ENCODE measurements at regions of chr14 and their contacts with region 1.

Region 1: GRCh38 chr14:49767562-49768300 is at the start of gene KLHDC2:
- DNase-seq: peak; percentile 94
- H3K4me3 Mint-ChIP-seq: peak within 1 kb of the TSS; percentile 88
- H3K27ac Mint-ChIP-seq: peak within 1 kb of the TSS; percentile 100
- H3K4me1 Mint-ChIP-seq: peaks cover 28% of the 10 kb centered on the region
- H3K27me3 Mint-ChIP-seq: no peaks in the 10 kb centered on the region
- total RNA-seq, gene KLHDC2: 27.8 to 28.2 TPM

Region 2: DNA sequence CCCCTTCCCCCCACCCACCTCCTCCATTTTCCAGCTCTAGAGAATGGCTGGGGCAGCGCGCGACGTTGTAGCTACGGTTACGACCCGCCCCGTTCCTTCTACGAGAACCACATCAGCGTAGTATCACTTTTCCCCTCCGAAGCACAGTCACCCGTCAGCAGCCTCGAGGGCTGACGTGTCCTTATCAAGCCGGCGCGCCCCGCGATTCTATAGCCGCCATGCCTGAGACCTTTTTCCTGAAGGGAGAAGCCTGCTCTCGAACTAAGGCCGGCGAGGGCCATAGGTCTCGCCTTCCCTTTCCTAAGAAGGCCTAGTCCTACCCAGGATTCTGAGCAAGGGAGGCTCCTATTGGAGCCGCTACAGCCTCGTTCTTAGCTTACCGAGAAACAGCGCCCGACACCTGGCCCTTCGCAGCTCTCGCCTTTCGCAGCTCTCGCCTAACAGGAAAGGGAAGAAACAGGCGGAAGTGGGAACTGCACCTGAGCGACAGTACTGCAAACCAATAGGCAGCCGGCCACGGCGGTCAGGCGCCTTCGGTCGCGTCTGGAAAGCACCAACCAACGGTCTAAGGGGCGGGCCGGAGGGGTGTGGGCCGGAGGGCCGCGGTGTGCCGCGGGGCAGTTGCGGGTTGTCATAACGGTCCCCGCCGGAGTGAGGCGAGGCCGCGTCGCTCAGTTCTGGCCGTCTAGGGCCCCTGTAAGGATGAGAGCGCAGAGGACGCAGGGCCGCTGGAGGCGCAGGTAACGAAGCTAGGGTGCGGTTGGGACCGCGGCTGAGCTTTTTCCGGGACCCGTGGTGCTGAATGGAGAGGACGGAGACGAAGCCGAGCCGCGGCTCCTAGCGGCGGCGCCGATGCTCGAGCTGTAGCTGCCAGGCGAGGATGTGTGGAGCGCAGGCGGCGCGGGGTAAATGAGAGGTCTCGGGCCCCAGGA is 147.3 kb before region 1 on chr14 and contains the starts of genes MGAT2 and RPL36AL:
- CTCF ChIA-PET with region 1: interaction called, 6 read pairs
- POLR2A ChIA-PET with region 1: interaction called, 21 read pairs
- intact Hi-C with region 1: loop called (anchors 1 kb)
- DNase-seq: peak; percentile 98
- H3K4me3 Mint-ChIP-seq: peak within 1 kb of the TSS; percentile 96
- H3K27ac Mint-ChIP-seq: peak within 1 kb of the TSS; percentile 96
- H3K4me1 Mint-ChIP-seq: peaks cover 39% of the 10 kb centered on the region
- H3K27me3 Mint-ChIP-seq: no peaks in the 10 kb centered on the region
- total RNA-seq, gene MGAT2: 40.4 to 43.7 TPM
- total RNA-seq, gene RPL36AL: 314 to 320 TPM

Region 3: GRCh38 chr14:49692811-49693734 is 74.7 kb before region 1 on chr14 and contains the start of gene KLHDC1:
- CTCF ChIA-PET with region 1: interaction called, 6 read pairs
- POLR2A ChIA-PET with region 1: interaction called, 19 read pairs
- intact Hi-C with region 1: loop called (anchors 1 kb)
- DNase-seq: peak; percentile 86
- H3K4me3 Mint-ChIP-seq: peak within 1 kb of the TSS; percentile 77
- H3K27ac Mint-ChIP-seq: peak within 1 kb of the TSS; percentile 40
- H3K4me1 Mint-ChIP-seq: peaks cover 27% of the 10 kb centered on the region
- H3K27me3 Mint-ChIP-seq: no peaks in the 10 kb centered on the region
- total RNA-seq, gene KLHDC1: 1.4 to 1.9 TPM

Region 4: GRCh38 chr14:49852301-49853157 is 84.8 kb after region 1 on chr14 and contains the start of gene NEMF:
- CTCF ChIA-PET with region 1: interaction called, 9 read pairs
- POLR2A ChIA-PET with region 1: interaction called, 16 read pairs
- intact Hi-C with region 1: loop called (anchors 2 kb)
- DNase-seq: peak; percentile 88
- H3K4me3 Mint-ChIP-seq: peak within 1 kb of the TSS; percentile 98
- H3K27ac Mint-ChIP-seq: peak within 1 kb of the TSS; percentile 95
- H3K4me1 Mint-ChIP-seq: peaks cover 39% of the 10 kb centered on the region
- H3K27me3 Mint-ChIP-seq: no peaks in the 10 kb centered on the region
- total RNA-seq, gene NEMF: 63.6 to 71.0 TPM

Region 5: GRCh38 chr14:49977126-49977841 is 209.6 kb after region 1 on chr14:
- CTCF ChIA-PET with region 1: no interaction called
- POLR2A ChIA-PET with region 1: no interaction called
- intact Hi-C with region 1: no loop called
- DNase-seq: peak; percentile 65
- H3K4me3 Mint-ChIP-seq: peak overlapping the region; percentile 66
- H3K27ac Mint-ChIP-seq: peak overlapping the region; percentile 91
- H3K4me1 Mint-ChIP-seq: peaks cover 87% of the 10 kb centered on the region
- H3K27me3 Mint-ChIP-seq: no peaks in the 10 kb centered on the region

Region 6: DNA sequence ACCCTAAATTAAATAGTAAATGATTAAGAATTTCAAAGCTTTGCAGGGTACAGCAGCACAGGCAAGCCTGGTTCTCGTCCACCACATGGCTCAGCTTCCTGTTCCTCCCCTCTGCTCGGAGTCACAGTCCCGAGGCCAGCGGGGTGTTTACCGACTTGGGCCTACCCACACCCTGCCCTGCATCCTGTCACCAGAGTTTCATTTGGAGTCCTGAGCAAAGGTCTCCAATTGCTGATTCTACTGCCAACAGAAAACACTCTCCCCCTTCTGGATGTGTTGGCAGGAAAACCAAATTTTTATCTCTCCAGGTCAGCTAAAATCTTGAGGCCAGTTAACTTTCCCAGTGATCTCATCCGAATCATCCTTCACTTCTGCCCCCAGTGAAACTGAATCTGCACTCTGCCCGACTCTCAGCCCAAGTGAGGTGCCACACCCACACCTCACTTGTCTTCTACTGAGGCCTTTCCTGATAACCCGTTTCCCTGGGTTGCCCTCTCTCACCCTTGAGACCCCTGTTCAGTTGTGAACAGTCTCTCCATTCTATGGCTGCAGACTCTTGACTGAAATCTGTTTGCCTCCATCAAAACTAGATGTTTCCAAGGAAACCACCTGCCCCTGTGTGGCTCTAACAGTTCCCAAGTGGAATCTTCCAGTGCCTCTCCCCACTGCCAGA is 277.4 kb after region 1 on chr14:
- CTCF ChIA-PET with region 1: no interaction called
- POLR2A ChIA-PET with region 1: no interaction called
- intact Hi-C with region 1: loop called (anchors 10 kb)
- DNase-seq: peak; percentile 90
- H3K4me3 Mint-ChIP-seq: peak overlapping the region; percentile 0
- H3K27ac Mint-ChIP-seq: peak overlapping the region; percentile 87
- H3K4me1 Mint-ChIP-seq: peaks cover 59% of the 10 kb centered on the region
- H3K27me3 Mint-ChIP-seq: no peaks in the 10 kb centered on the region

Region 7: DNA sequence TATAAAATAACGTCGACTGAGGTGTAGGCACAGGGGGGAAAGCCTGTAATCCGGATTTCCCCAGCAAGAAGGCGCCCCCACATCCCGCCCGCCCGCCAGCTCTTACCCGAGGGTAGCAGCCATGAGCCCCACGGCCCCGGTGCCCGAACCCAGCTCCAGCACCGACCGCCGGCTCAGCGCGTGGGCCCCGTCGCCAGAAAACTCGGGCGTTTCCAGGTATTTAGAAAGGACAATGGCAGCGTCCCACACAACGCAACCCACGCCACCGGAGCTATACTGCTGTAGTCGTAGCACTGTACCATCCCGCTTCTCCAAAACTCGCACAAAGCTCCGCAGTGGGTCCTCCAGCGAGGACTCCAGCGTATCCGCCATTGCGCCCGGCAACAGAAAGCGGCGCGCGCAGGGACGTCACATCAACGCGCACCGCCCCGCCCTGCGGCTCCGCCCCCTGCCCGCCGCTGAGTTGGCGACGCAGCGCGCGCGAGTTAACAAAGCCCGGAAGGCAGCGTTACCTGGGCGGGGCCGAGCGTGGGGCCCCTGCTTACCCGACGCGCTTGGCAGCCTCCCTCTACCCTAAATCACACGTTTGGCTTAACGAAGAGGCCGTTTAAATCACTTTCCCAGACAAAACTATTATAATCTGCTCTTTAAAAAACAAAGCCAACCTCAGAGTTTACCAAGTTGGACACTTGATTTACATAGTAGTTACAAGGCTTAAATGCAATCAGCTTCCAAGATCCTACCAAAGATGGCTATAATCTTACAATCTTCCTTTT is 348.6 kb after region 1 on chr14 and contains the start of gene VCPKMT:
- CTCF ChIA-PET with region 1: no interaction called
- POLR2A ChIA-PET with region 1: interaction called, 4 read pairs
- intact Hi-C with region 1: loop called (anchors 2 kb)
- DNase-seq: peak; percentile 96
- H3K4me3 Mint-ChIP-seq: peak within 1 kb of the TSS; percentile 98
- H3K27ac Mint-ChIP-seq: peak within 1 kb of the TSS; percentile 95
- H3K4me1 Mint-ChIP-seq: peaks cover 37% of the 10 kb centered on the region
- H3K27me3 Mint-ChIP-seq: no peaks in the 10 kb centered on the region
- total RNA-seq, gene VCPKMT: 7.7 to 10.1 TPM

Region 8: GRCh38 chr14:50148799-50149198 is 381.1 kb after region 1 on chr14:
- CTCF ChIA-PET with region 1: no interaction called
- POLR2A ChIA-PET with region 1: no interaction called
- intact Hi-C with region 1: no loop called
- DNase-seq: no peak
- H3K4me3 Mint-ChIP-seq: no peak overlapping the region
- H3K27ac Mint-ChIP-seq: no peak overlapping the region
- H3K4me1 Mint-ChIP-seq: no peaks in the 10 kb centered on the region
- H3K27me3 Mint-ChIP-seq: no peaks in the 10 kb centered on the region

Region 9: DNA sequence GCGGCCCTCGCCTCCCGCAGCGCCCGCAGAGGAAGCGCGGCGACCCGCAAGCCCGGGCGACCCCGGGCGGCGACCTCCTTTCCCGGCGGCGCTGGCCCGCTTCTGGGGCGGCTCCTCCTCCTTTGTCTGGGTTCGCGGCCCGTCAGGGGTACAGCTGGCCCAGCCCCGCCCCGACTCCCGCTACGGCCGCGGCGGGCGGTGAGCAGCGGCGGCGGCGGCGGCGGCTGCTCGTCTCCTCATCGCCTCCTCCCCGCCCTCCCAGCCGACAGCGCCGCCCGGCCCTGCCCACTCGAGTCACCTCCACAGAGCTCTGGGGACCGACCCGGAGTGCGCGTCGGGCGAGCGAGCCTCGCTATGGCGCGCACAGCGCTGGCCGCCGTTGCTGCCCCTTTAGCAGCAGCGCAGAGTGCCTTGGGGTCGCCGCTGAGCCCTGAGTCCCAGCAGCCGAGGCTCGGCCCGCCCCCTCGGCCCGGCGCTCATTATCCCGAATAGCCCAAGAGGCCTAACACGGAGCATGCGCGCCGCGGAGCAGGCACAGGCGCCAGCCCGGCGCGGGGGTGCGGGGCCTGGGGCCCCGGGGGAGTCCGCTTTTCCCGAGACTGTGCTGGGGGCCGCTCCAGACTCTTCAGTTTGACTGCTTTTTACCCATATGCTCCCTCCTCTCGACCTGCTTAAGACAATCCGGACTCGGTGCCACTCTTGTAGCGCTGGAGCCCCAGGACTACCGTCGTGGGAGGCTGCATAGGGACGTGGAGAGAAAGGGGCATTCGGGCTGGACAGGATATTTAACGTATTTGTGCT is 463.9 kb after region 1 on chr14 and contains the start of gene SOS2:
- CTCF ChIA-PET with region 1: no interaction called
- POLR2A ChIA-PET with region 1: interaction called, 4 read pairs
- intact Hi-C with region 1: loop called (anchors 1 kb)
- DNase-seq: peak; percentile 86
- H3K4me3 Mint-ChIP-seq: peak within 1 kb of the TSS; percentile 78
- H3K27ac Mint-ChIP-seq: peak within 1 kb of the TSS; percentile 85
- H3K4me1 Mint-ChIP-seq: peaks cover 40% of the 10 kb centered on the region
- H3K27me3 Mint-ChIP-seq: no peaks in the 10 kb centered on the region
- total RNA-seq, gene SOS2: 19.6 to 20.9 TPM

Measured in activated CD4-positive, alpha-beta memory T cell treated with anti-CD3 and anti-CD28 coated beads for 36 hours (primary cell).